ENCODE measurements at regions of chr11 and their contacts with region 1.

Region 1: DNA sequence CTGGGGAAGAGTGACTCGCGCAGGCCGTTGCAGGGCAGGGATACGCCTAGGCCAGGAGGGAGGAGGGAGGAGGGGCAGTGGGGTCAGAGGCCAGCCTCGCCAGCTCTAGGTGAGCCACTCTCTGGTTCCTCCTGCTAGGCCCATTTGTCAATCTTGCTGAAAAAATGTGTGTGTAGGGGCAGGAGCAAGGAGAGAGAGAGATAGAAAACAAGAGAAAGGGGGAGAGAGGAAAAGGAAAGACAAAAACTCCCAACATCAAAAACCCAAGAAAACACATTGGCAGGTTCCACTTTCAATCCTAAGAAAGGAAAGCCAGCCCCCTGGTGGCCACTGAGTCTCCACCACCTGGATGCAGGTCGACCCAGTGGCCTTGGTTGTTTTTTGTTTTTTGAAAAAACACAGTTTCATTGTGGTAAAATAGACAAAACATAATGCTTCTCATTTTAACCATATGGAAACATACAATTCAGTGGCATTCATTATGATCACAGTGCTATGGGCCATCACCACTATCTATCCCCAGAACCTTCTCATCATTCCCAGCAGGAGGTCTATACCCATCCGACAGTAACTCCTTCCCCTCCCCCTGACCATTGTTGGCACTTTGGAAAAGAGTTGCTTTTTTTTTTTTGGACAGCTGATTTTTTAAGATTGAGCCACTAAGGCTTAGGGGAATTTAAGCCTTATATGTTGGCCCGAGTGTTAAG is 10.9 kb downstream of the OMP start:
- DNase-seq: peak; percentile 52 to 82
- ATAC-seq: peak; percentile 31 to 73; a peak in 3 of 6 replicates
- H3K4me3 ChIP-seq: no peak overlapping the region
- H3K27ac ChIP-seq: peak overlapping the region in 1 of 2 experiments; percentile 48; a peak in 2 of 6 replicates
- H3K4me1 ChIP-seq: peaks cover 31% of the 10 kb centered on the region
- CTCF ChIP-seq: peak; percentile 73
- EP300 ChIP-seq: no peak
- POLR2A ChIP-seq: no peak
- RAD21 ChIP-seq: peak; percentile 59 to 62

Region 2: DNA sequence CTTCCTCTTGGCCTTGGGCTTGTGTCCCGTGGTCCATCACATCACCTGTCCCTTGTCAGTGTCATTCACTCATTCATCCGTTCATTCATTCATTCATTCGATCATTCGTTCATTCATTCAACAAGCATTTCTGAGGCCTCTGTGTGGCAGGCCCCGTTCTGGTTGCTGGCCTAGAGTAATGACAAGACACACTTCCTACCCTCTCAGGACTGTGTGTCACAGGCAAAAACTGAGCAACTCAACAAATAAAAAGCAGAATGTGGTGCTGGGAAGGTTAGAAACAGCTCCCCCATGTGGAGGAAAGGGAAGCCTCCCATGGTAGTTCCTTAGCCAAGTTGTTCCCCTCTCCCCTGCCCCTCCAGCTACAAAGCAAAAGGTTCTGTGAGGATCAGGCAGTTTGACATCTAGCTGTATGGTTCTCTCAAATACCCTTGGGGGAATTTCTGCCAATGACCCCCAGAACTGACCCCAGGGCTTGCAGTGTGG is 12.4 kb before region 1 on chr11:
- CTCF ChIA-PET with region 1: interaction called, 290 read pairs
- POLR2A ChIA-PET with region 1: no interaction called
- DNase-seq: peak; percentile 56 to 57
- ATAC-seq: peak; percentile 27 to 75; a peak in 4 of 6 replicates
- H3K4me3 ChIP-seq: no peak overlapping the region
- H3K27ac ChIP-seq: no peak overlapping the region
- H3K4me1 ChIP-seq: peaks cover 6% of the 10 kb centered on the region
- CTCF ChIP-seq: peak; percentile 48
- EP300 ChIP-seq: no peak
- POLR2A ChIP-seq: no peak
- RAD21 ChIP-seq: peak in 1 of 2 experiments; percentile 21; a peak in 2 of 5 replicates

Region 3: GRCh38 chr11:78112582-78113275 is 999.2 kb after region 1 on chr11:
- CTCF ChIA-PET with region 1: no interaction called
- POLR2A ChIA-PET with region 1: no interaction called
- DNase-seq: no peak
- ATAC-seq: no peak
- H3K4me3 ChIP-seq: no peak overlapping the region
- H3K27ac ChIP-seq: no peak overlapping the region
- H3K4me1 ChIP-seq: no peaks in the 10 kb centered on the region
- CTCF ChIP-seq: no peak
- EP300 ChIP-seq: no peak
- POLR2A ChIP-seq: no peak
- RAD21 ChIP-seq: no peak

Measured in A549 (cell line).